Body of pancreas (tissue), 4 donors: ENCODE measurements at regions of chr7 and their contacts with region 1.

Region 1: GRCh38 chr7:13279854-13280435 is 592.5 kb downstream of the ARL4A start:
- DNase-seq: no peak
- ATAC-seq: no peak
- H3K4me3 ChIP-seq: no peak overlapping the region
- H3K27ac ChIP-seq: no peak overlapping the region
- H3K4me1 ChIP-seq: no peaks in the 10 kb centered on the region
- H3K27me3 ChIP-seq: no peaks in the 10 kb centered on the region
- CTCF ChIP-seq: peak; percentile 19 to 56 (median 50)
- POLR2A ChIP-seq: no peak

Region 2: DNA sequence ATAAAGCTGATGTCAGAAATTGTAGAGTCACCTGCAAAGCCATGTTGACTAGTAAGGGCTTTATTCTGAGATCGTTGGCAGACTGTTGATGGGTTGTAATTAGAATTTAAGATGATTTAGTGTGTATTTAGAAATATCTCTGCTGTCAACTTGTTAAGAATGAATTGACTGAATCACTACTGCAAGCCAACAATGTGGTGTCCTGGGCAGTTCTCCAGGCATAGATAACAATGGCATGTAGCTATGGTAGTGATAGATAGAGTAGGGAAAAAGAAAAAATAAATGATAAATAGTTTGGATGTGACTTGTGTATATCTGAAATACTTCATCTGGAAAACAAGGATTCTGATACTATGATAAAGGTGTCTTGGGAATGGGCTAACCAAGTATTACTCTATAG is 47.7 kb after region 1 on chr7:
- intact Hi-C with region 1: no loop called
- DNase-seq: no peak
- ATAC-seq: no peak
- H3K4me3 ChIP-seq: no peak overlapping the region
- H3K27ac ChIP-seq: no peak overlapping the region
- H3K4me1 ChIP-seq: no peaks in the 10 kb centered on the region
- H3K27me3 ChIP-seq: no peaks in the 10 kb centered on the region
- CTCF ChIP-seq: no peak
- POLR2A ChIP-seq: no peak

Region 3: DNA sequence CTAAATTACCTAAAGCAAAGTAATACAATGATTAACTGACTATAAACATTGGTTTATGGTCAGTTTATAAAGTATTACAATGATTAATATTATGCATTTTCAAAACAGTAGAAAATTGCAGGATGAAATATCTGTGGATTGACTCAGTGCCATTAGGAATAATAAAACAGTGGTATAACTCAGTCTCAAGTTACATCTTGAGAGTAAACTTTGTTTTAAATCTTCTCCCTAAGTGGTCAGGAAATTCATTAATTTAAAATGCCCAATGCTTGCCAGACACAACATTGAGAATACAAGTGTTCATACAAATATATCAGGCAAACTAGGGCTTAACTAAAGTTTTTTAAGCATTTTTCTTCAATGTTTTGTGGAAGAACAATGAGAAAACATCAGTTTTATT is 451.7 kb after region 1 on chr7:
- intact Hi-C with region 1: loop called (anchors 10 kb)
- DNase-seq: no peak
- ATAC-seq: no peak
- H3K4me3 ChIP-seq: no peak overlapping the region
- H3K27ac ChIP-seq: no peak overlapping the region
- H3K4me1 ChIP-seq: no peaks in the 10 kb centered on the region
- H3K27me3 ChIP-seq: no peaks in the 10 kb centered on the region
- CTCF ChIP-seq: no peak
- POLR2A ChIP-seq: no peak

Region 4: GRCh38 chr7:14332155-14332554 is 1052.2 kb after region 1 on chr7:
- intact Hi-C with region 1: no loop called
- DNase-seq: peak in 3 of 4 donors; percentile 46 to 77 (median 50)
- ATAC-seq: peak; percentile 71
- H3K4me3 ChIP-seq: no peak overlapping the region
- H3K27ac ChIP-seq: no peak overlapping the region
- H3K4me1 ChIP-seq: peaks cover 8% of the 10 kb centered on the region
- H3K27me3 ChIP-seq: no peaks in the 10 kb centered on the region
- CTCF ChIP-seq: no peak
- POLR2A ChIP-seq: no peak

Region 5: DNA sequence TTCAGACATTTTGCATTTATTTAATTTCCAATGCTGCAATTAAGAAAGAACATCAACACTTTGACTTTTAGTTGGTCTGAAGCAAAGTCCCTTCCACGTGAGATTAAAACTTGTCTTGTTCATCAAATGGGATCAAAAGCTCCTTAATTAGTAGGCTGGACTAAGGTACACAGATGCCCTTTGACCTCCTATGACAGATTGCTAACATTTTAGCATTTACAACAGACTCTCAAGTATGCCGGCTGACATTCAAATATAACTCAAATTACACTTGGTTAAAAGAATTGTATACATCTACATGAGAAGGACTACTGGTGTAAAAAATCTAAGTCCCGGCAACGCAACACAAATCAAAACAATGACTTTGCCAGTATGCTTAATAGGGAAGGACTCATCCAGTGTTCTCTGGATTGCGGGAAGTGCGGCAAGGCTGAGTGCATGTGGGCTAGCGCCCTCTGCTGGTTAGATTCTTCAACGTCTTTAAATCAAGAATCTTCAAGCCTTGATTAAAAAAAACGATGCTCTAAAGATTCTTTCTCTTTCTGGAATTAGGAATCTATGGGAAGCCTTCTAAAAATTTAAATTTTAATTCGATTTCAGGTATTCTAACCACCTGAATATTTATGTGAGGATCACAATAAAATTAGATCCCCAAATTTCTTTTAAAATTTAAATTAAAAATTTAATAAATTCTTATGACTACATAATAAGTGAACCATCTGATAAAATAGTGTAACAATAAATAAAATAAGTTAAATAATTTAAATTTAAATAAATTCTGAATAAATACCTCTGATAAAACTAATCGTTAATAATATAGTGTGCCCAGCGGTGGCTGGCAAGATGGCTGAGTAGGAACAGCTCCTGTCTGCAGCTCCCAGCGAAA is 1177.9 kb after region 1 on chr7:
- intact Hi-C with region 1: loop called (anchors 10 kb)
- DNase-seq: peak; percentile 75 to 80 (median 77)
- ATAC-seq: peak; percentile 77
- H3K4me3 ChIP-seq: no peak overlapping the region
- H3K27ac ChIP-seq: no peak overlapping the region
- H3K4me1 ChIP-seq: peaks cover 4% of the 10 kb centered on the region
- H3K27me3 ChIP-seq: peaks cover 0 to 5% of the 10 kb centered on the region in 2 donors
- CTCF ChIP-seq: peak; percentile 72 to 89 (median 78)
- POLR2A ChIP-seq: no peak

Region 6: GRCh38 chr7:14691597-14692203 is 1411.8 kb after region 1 on chr7:
- intact Hi-C with region 1: loop called (anchors 10 kb)
- DNase-seq: peak; percentile 44 to 72 (median 53)
- ATAC-seq: no peak
- H3K4me3 ChIP-seq: no peak overlapping the region
- H3K27ac ChIP-seq: no peak overlapping the region
- H3K4me1 ChIP-seq: no peaks in the 10 kb centered on the region
- H3K27me3 ChIP-seq: no peaks in the 10 kb centered on the region
- CTCF ChIP-seq: peak; percentile 68 to 88 (median 76)
- POLR2A ChIP-seq: no peak